Activated CD4-positive, alpha-beta memory T cell treated with anti-CD3 and anti-CD28 coated beads for 36 hours (primary cell): ENCODE measurements at regions of chr2 and their contacts with region 1.

Region 1: DNA sequence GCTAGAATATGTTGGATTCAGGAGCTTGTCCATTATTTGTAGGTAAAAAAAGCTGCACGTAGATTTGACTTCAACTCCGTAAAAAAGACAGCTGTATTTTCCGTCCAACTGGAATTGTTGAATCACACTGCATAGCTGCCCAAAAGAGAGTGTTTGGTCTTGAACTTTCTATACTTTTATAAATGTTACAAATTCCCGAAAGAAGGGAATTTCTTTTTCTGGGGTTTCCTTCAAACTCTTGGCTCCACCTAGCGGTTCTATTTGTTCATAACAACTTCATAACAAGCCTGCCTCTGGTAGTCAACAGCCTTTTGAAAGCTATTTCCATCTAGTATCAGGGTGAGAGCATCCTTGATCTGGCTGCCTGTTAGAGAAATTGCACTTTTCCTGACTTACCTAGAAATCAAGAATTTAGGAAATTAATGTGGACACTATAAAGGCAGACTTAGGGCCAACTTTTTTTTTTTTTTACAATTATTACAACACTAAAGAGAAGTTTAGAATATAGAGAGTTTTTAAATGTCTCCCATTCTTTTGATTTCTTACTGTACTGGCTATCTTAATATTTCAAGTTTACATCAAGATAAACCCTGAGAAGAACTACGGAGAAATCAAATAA is 48.1 kb downstream of the TMEM185B start:
- DNase-seq: no peak
- H3K4me3 Mint-ChIP-seq: no peak overlapping the region
- H3K27ac Mint-ChIP-seq: no peak overlapping the region
- H3K4me1 Mint-ChIP-seq: peaks cover 44% of the 10 kb centered on the region
- H3K27me3 Mint-ChIP-seq: no peaks in the 10 kb centered on the region

Region 2: DNA sequence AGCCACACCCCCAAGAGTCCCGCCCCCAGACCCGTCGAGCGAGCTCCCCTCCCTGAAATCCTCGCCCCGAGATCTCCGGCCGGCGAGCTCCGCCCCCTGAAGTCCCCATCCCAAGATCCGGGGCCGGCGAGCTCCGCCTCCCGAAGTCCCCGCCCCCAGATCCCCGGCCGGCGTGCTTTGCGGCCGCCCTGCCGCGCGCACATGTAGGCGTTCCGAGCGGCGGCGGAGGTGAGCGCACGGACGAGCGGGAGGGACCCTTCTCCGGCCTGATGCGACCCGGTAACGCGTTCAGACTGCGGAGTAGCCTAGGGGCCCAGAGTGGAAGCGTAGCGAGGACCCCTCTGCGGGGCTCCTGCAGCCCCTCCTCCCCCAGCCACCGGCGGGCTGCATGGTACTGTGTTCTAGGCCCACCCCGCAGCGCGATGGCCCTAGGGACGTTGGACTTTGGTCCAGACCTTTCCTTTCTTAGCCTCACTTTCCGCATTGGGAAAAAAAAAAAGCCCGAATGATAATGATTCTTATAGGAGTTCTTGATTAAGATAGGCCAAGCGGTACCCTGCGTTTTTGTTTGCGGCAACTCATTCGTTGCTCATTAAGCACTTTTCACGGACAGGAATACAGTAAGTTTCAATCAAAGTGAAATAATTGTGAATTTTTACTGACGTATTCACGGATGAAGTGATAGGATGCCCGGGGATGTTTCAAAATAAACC is 495.9 kb before region 1 on chr2 and contains the start of gene TMEM177:
- CTCF ChIA-PET with region 1: interaction called, 11 read pairs
- POLR2A ChIA-PET with region 1: interaction called, 3 read pairs
- intact Hi-C with region 1: loop called (anchors 1 kb)
- DNase-seq: peak; percentile 93
- H3K4me3 Mint-ChIP-seq: peak within 1 kb of the TSS; percentile 86
- H3K27ac Mint-ChIP-seq: peak within 1 kb of the TSS; percentile 77
- H3K4me1 Mint-ChIP-seq: peaks cover 34% of the 10 kb centered on the region
- H3K27me3 Mint-ChIP-seq: no peaks in the 10 kb centered on the region
- total RNA-seq, gene TMEM177: 13.5 to 14.9 TPM

Region 3: DNA sequence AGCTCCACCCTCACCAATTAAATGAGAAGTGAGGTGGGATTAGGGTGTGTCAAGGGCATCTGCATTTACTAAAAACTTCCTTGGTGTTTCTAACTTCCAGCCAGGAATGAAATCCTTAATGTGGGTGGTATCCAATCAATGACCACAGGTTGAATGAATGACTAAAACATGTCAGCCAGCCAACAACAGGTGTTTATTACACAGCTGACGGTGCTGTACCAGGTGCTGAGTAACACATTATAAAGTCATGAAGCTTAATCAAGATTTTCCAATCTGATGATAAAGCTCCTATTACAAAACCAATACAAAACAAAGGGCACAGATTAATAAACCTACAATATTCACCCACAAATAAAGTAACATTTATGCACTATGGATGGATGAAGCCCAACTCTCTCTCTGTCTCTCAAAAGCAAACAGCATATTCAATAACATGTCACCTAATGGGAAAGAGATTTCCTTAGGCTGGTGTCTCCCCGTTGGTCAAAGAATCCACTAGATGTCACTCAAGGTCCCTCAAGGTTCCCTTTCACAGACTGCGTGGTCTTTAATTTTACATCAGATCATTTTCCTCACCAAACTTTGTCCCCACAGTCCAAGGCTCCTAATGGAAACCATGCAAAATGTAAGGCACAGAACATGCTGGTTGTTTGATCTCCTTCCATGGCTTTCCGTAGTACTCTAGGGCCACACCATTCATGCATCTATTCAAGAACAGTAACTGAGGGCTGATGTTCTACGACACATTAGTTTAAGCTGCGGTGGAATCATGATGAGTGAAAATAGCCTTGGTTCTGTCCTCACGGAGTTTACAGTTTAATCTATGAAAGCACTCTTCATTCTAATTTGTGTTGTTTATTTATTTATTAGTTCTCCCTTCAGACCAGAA is 421.8 kb before region 1 on chr2:
- CTCF ChIA-PET with region 1: interaction called, 41 read pairs
- POLR2A ChIA-PET with region 1: no interaction called
- intact Hi-C with region 1: loop called (anchors 1 kb)
- DNase-seq: peak; percentile 19
- H3K4me3 Mint-ChIP-seq: no peak overlapping the region
- H3K27ac Mint-ChIP-seq: no peak overlapping the region
- H3K4me1 Mint-ChIP-seq: peaks cover 16% of the 10 kb centered on the region
- H3K27me3 Mint-ChIP-seq: no peaks in the 10 kb centered on the region

Region 4: DNA sequence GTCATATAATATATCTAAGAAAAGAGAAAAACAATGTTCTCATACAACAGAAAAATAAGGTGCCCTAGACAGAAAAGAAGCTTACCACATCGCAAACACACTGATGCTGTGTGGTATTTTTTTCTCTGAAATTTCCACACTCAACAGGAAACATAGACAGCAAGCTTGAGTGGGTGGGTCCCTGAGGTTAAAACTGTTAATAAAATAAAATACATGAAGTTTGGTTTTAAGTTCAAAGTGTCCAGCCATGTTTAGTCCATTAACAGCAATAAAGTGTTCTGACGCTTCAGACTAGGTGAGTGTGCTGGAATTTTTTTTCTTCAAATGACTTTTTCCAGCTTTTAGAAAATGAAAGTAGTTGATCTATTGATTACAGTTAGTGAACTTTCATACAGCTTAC is 245.5 kb before region 1 on chr2:
- CTCF ChIA-PET with region 1: interaction called, 3 read pairs
- POLR2A ChIA-PET with region 1: no interaction called
- intact Hi-C with region 1: loop called (anchors 5 kb)
- DNase-seq: no peak
- H3K4me3 Mint-ChIP-seq: peak overlapping the region; percentile 65
- H3K27ac Mint-ChIP-seq: peak overlapping the region; percentile 71
- H3K4me1 Mint-ChIP-seq: peaks cover 65% of the 10 kb centered on the region
- H3K27me3 Mint-ChIP-seq: no peaks in the 10 kb centered on the region

Region 5: DNA sequence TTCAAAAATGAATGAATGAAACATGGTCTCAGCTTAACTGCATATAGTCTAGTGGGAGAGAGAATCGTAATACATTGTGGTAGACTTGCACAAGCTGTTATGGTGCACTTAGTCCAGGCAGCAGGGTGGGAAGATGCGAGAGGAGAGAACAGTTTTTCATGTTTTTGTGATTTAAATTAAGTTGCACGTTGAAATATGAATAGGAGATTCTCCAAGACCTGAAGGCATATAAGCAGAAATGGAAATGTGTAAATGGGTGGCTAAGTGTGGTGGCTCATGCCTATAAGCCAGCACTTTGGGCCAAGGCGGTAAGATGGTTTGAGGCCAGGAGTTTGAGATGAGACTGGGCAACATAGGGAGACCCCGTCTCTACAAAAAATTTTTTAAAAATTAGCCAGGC is 12.4 kb before region 1 on chr2:
- CTCF ChIA-PET with region 1: interaction called, 12 read pairs
- POLR2A ChIA-PET with region 1: interaction called, 3 read pairs
- intact Hi-C with region 1: no loop called
- DNase-seq: no peak
- H3K4me3 Mint-ChIP-seq: no peak overlapping the region
- H3K27ac Mint-ChIP-seq: no peak overlapping the region
- H3K4me1 Mint-ChIP-seq: no peaks in the 10 kb centered on the region
- H3K27me3 Mint-ChIP-seq: no peaks in the 10 kb centered on the region

Region 6: DNA sequence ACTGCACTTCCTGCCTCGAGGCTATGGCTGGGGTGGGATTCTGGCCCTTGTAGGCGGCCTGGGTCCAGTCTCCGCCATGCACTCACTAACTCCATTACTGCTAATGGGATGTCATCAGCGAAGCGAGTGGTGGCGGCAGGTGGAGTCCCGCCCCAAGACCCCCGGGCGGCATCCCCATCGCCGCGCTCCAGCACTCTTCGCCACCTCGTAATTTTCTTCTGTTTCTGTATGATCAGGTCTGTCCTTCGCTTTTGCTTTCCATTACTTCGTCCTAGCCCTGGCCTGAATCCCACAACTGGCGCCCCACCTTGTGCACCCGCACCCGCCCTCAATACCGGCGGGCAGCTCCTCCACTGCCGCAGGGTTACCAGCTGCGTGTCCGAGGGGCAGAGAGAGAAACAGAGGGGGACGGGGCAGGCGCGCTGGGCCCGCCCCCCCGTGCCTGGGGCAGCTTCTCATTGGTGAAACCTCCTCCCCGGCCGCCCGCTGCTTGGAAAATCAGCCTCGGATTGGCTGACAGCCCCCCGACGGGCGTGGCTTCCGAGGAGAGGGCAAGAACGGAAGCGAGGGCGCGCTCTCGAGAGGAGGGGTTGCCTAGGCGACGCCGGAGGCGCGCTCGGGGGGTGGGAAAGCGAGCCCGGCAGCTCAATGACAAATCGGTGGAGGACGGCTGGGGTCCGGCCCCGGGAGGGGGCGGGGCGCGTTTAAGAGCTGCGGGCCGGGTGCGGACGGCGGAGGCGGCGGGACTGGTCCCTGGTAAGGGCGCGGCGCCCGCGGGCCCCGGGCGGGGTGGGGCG is 77.4 kb after region 1 on chr2 and contains the start of gene RALB:
- CTCF ChIA-PET with region 1: interaction called, 20 read pairs
- POLR2A ChIA-PET with region 1: interaction called, 4 read pairs
- intact Hi-C with region 1: loop called (anchors 1 kb)
- DNase-seq: peak; percentile 99
- H3K4me3 Mint-ChIP-seq: peak within 1 kb of the TSS; percentile 98
- H3K27ac Mint-ChIP-seq: peak within 1 kb of the TSS; percentile 83
- H3K4me1 Mint-ChIP-seq: peaks cover 43% of the 10 kb centered on the region
- H3K27me3 Mint-ChIP-seq: peaks cover 7% of the 10 kb centered on the region
- total RNA-seq, gene RALB: 52.5 to 52.9 TPM